ENCODE measurements at regions of chr9 and their contacts with region 1.

Region 1: DNA sequence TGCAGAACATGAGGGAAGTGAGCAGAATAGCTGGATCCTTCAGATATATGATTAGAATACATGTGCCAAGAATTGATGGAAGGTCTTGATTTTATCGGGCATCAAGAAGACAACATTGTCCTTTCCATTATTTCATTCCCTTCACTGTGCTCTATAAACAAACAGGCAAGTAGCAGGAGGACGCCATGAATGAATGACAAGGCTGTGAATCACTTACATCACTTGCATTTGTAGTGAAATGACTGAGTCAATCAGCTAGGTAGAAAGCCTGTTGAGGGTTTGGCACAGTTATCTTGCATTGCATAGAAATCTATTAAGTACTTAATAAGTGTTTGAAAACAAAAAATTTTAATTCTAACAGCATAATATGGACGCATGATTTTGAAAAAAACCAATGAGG is 548.8 kb upstream of the IZUMO3 start:
- DNase-seq: no peak
- ATAC-seq: no peak
- H3K4me3 ChIP-seq: no peak overlapping the region
- H3K27ac ChIP-seq: no peak overlapping the region
- H3K4me1 ChIP-seq: no peaks in the 10 kb centered on the region
- H3K27me3 ChIP-seq: no peaks in the 10 kb centered on the region
- CTCF ChIP-seq: no peak
- POLR2A ChIP-seq: no peak

Region 2: GRCh38 chr9:25816439-25816838 is 721.9 kb after region 1 on chr9:
- in situ Hi-C with region 1: no loop called
- intact Hi-C with region 1: loop called (anchors 5 kb)
- DNase-seq: no peak
- ATAC-seq: no peak
- H3K4me3 ChIP-seq: no peak overlapping the region
- H3K27ac ChIP-seq: no peak overlapping the region
- H3K4me1 ChIP-seq: no peaks in the 10 kb centered on the region
- H3K27me3 ChIP-seq: no peaks in the 10 kb centered on the region
- CTCF ChIP-seq: no peak
- POLR2A ChIP-seq: no peak

Measured in gastrocnemius medialis (tissue), 4 donors.